Aorta (tissue), 5 donors: ENCODE measurements at regions of chr9 and their contacts with region 1.

Region 1: GRCh38 chr9:79896390-79896980 is 324.7 kb downstream of the TLE4 start:
- DNase-seq: no peak
- ATAC-seq: no peak
- H3K4me3 ChIP-seq: no peak overlapping the region
- H3K27ac ChIP-seq: no peak overlapping the region
- H3K4me1 ChIP-seq: no peaks in the 10 kb centered on the region
- H3K27me3 ChIP-seq: no peaks in the 10 kb centered on the region

Region 2: DNA sequence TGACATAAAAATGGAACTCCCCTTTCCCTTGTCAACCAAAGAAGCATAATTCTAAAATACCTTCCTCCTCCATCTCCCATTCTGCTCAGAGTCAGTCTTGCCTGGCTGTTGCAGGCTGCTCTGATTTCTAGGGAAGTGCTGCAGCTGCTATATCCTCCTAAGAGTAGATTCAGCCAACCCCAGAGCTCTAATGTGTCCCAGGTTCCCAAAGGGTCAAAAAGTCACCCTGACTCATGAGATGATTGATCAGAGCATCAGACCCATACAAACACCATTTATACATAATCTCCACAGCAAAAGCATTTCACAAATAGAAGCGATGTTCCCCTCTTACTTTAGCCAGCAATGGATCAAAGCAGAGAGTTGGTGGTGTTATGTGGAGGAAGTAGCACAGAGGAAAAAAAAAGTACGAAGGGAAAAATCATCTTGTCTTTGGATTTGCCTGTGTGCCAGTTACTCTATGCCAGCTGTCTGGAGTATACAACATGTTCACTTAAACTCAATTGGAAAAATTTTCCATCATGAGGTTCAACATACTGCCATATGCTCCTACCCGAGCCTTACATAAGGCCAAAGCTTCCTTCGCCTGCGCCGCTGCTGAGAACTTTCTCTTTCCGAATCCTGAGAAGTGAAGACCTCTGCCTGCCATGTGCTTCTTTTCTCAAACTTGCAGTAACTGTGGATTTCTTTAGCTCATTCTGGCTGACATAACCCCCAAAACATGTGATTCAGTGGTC is 66.8 kb before region 1 on chr9:
- intact Hi-C with region 1: loop called in 1 of 2 experiments (anchors 10 kb)
- DNase-seq: no peak
- ATAC-seq: no peak
- H3K4me3 ChIP-seq: no peak overlapping the region
- H3K27ac ChIP-seq: no peak overlapping the region
- H3K4me1 ChIP-seq: no peaks in the 10 kb centered on the region
- H3K27me3 ChIP-seq: no peaks in the 10 kb centered on the region

Region 3: GRCh38 chr9:79928661-79929223 is 32.3 kb after region 1 on chr9:
- intact Hi-C with region 1: no loop called
- DNase-seq: no peak
- ATAC-seq: no peak
- H3K4me3 ChIP-seq: no peak overlapping the region
- H3K27ac ChIP-seq: no peak overlapping the region
- H3K4me1 ChIP-seq: no peaks in the 10 kb centered on the region
- H3K27me3 ChIP-seq: no peaks in the 10 kb centered on the region

Region 4: GRCh38 chr9:79955300-79955699 is 58.8 kb after region 1 on chr9:
- intact Hi-C with region 1: no loop called
- DNase-seq: no peak
- ATAC-seq: no peak
- H3K4me3 ChIP-seq: no peak overlapping the region
- H3K27ac ChIP-seq: no peak overlapping the region
- H3K4me1 ChIP-seq: no peaks in the 10 kb centered on the region
- H3K27me3 ChIP-seq: no peaks in the 10 kb centered on the region